CD8-positive, alpha-beta T cell (primary cell): ENCODE measurements at regions of chr1 and their contacts with region 1.

Region 1: GRCh38 chr1:156500797-156501499 is 373 bp upstream of the MEF2D start:
- DNase-seq: peak; percentile 86 to 97 (median 94)
- ATAC-seq: peak; percentile 66
- H3K4me3 ChIP-seq: peak overlapping the region; percentile 87 to 92
- H3K4me3 Mint-ChIP-seq: peak overlapping the region; percentile 92
- H3K27ac ChIP-seq: peak overlapping the region; percentile 93 to 97
- H3K27ac Mint-ChIP-seq: peak overlapping the region; percentile 98
- H3K4me1 ChIP-seq: peaks cover 76% of the 10 kb centered on the region
- H3K4me1 Mint-ChIP-seq: peaks cover 76% of the 10 kb centered on the region
- H3K27me3 ChIP-seq: no peaks in the 10 kb centered on the region
- H3K27me3 Mint-ChIP-seq: no peaks in the 10 kb centered on the region
- CTCF ChIP-seq: peak; percentile 68

Region 2: DNA sequence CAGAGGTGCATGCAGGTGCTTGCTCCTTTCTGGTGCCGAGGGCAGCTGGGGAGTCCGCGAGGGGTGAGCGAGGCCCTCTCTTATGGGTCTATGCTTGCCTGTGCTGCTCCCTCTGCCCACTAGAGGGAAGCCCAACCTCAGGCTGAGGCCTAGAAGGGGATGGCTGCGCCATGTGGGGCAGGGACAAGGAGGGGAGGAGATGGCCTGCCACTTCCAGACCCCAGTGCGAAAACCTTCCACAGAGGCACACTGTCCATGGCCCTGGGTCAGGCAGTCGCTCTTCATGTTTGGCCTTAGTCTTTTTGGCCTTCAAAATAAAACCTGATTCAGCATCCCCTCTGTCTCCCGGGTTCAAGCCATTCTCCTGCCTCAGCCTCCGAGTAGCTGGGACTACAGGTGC is 117.9 kb before region 1 on chr1:
- CTCF ChIA-PET with region 1: interaction called, 10 read pairs
- POLR2A ChIA-PET with region 1: interaction called, 4 read pairs
- intact Hi-C with region 1: no loop called
- DNase-seq: peak; percentile 21 to 73 (median 64)
- ATAC-seq: peak; percentile 82
- H3K4me3 ChIP-seq: no peak overlapping the region
- H3K4me3 Mint-ChIP-seq: no peak overlapping the region
- H3K27ac ChIP-seq: no peak overlapping the region
- H3K27ac Mint-ChIP-seq: no peak overlapping the region
- H3K4me1 ChIP-seq: peaks cover 6% of the 10 kb centered on the region
- H3K4me1 Mint-ChIP-seq: peaks cover 7% of the 10 kb centered on the region
- H3K27me3 ChIP-seq: peaks cover 0 to 3% of the 10 kb centered on the region in 2 experiments
- H3K27me3 Mint-ChIP-seq: peaks cover 9% of the 10 kb centered on the region
- CTCF ChIP-seq: peak; percentile 61

Region 3: DNA sequence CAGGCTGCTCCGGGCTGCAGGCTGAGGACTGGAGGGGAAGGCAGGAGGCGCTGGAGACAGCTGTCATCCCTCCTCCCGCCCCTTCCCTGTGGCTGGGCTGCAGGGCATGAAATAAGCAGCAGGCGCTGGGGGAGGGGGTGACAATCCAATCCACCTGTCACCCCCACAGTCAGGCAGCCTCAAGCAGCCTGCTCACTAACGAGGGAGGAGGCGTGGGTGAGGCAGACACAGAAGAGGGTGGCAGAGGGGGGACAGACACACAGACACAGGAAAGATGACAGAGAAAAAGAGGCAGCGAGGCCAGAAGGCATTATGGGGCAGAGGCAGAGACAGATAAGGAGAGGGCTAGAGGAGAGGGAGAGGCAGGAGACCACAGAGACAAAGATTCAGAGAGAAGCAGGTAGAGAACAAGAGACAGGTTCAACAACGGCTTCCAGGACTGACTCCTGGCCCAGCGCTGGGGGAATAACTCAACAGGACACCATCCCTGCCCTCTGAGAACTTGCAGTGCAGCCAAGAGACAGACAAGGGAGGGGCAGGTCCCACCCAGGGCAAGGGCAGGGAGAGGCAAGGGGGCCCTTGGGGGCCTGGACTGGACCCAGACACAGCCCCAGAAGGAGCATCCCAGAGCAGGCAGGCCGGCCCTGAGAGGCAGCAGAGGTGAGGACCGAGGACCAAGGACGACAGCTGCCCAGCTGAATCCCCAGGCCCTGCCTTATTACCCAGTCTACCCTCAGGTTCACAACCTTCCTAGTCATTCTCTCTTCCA is 11.6 kb before region 1 on chr1:
- CTCF ChIA-PET with region 1: interaction called, 66 read pairs
- POLR2A ChIA-PET with region 1: interaction called, 203 read pairs
- intact Hi-C with region 1: loop called in 1 of 2 experiments (anchors 1 kb)
- DNase-seq: peak in 7 of 9 experiments; percentile 34 to 79 (median 64)
- ATAC-seq: peak; percentile 73
- H3K4me3 ChIP-seq: peak overlapping the region; percentile 24 to 29
- H3K4me3 Mint-ChIP-seq: peak overlapping the region; percentile 73
- H3K27ac ChIP-seq: peak overlapping the region; percentile 44 to 88
- H3K27ac Mint-ChIP-seq: peak overlapping the region; percentile 93
- H3K4me1 ChIP-seq: peaks cover 85% of the 10 kb centered on the region
- H3K4me1 Mint-ChIP-seq: peaks cover 94% of the 10 kb centered on the region
- H3K27me3 ChIP-seq: no peaks in the 10 kb centered on the region
- H3K27me3 Mint-ChIP-seq: no peaks in the 10 kb centered on the region
- CTCF ChIP-seq: no peak

Region 4: GRCh38 chr1:156533568-156534215 is 32.7 kb after region 1 on chr1:
- CTCF ChIA-PET with region 1: interaction called, 7 read pairs
- POLR2A ChIA-PET with region 1: interaction called, 7 read pairs
- intact Hi-C with region 1: loop called in 1 of 2 experiments (anchors 5 kb)
- DNase-seq: no peak
- ATAC-seq: no peak
- H3K4me3 ChIP-seq: no peak overlapping the region
- H3K4me3 Mint-ChIP-seq: no peak overlapping the region
- H3K27ac ChIP-seq: no peak overlapping the region
- H3K27ac Mint-ChIP-seq: peak overlapping the region; percentile 13
- H3K4me1 ChIP-seq: peaks cover 3% of the 10 kb centered on the region
- H3K4me1 Mint-ChIP-seq: peaks cover 3% of the 10 kb centered on the region
- H3K27me3 ChIP-seq: no peaks in the 10 kb centered on the region
- H3K27me3 Mint-ChIP-seq: no peaks in the 10 kb centered on the region
- CTCF ChIP-seq: no peak

Region 5: DNA sequence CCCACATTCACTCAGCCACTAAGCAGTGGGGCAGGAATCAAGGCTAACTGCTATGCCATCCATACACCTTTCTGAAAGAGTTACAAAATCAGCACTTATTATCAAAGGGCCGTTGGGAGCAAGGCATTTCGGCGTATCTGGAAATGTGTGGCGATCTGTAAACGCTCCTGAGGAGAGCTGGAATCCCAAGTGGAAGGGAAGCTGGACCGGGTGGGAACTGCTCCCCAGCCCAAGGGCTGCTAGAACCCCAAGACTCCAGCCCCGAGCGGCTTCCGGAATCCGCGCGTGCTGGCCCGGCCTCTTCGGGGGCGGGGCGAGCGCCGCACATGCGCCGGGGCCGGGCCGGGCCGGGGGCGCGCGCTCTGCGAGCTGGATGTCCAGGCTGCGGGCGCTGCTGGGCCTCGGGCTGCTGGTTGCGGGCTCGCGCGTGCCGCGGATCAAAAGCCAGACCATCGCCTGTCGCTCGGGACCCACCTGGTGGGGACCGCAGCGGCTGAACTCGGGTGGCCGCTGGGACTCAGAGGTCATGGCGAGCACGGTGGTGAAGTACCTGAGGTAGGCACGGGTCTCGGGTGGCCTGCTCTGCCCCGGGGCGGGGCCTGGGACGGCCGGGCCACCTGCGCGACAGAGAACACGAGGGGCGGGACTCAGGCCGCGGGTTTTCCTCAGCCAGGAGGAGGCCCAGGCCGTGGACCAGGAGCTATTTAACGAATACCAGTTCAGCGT is 90.6 kb after region 1 on chr1 and contains the start of gene NAXE:
- CTCF ChIA-PET with region 1: interaction called, 3 read pairs
- POLR2A ChIA-PET with region 1: interaction called, 16 read pairs
- intact Hi-C with region 1: loop called in 1 of 2 experiments (anchors 2 kb)
- DNase-seq: peak; percentile 21 to 84 (median 66)
- ATAC-seq: peak; percentile 95
- H3K4me3 ChIP-seq: peak within 1 kb of the TSS; percentile 51 to 83
- H3K4me3 Mint-ChIP-seq: peak within 1 kb of the TSS; percentile 87
- H3K27ac ChIP-seq: peak within 1 kb of the TSS; percentile 49 to 86
- H3K27ac Mint-ChIP-seq: peak within 1 kb of the TSS; percentile 91
- H3K4me1 ChIP-seq: peaks cover 18% of the 10 kb centered on the region
- H3K4me1 Mint-ChIP-seq: peaks cover 22% of the 10 kb centered on the region
- H3K27me3 ChIP-seq: no peaks in the 10 kb centered on the region
- H3K27me3 Mint-ChIP-seq: no peaks in the 10 kb centered on the region
- CTCF ChIP-seq: no peak
- total RNA-seq, gene NAXE: 18.4 TPM

Region 6: DNA sequence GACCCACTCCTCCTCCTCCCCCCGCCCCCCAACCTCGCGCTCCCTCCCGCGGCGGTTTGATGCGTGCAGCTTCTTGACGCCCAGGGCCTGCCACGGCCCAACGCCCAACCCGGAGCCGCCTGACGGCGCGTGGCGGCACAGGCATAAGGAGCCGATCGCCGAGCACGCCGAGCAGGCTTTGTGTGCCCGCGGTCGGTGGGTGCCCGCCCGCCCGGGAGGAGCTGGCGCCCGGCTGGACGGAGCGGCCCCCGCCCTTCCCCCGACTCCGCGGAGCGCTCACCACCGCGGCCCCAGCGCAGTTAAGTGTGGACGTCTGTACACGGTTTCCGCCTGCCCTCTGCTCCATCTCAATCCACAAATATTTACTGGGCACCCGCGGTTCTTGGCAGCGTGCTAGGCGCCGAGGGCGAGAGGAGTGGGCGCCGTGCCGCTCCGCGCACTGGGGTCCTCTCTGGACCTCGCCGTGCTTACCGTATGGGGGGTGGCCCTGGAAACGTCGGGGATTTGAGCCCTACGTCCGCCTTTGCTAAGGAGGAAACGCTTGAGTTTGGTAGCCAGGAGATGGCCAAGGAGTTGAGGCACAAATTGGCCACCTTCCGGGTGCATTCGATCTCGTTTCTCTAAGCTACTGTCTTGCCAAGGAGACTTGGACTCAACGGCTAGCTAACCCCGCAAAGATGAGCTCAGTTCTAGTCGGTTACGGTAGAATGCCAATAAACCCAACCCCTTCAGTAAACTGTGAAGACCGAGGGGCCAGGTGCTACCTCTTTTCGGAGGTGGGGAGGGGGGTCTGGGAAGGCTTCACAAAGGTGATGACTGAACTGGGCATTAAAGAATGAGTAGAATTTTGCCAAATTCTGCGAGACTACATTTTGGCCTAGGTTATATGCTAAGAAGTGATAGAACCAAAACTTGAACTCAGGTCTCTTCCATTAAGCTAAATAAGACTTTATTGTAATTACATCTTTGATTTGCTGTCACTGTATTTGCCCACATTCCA is 251.1 kb after region 1 on chr1:
- CTCF ChIA-PET with region 1: no interaction called
- POLR2A ChIA-PET with region 1: interaction called, 5 read pairs
- intact Hi-C with region 1: loop called in 1 of 2 experiments (anchors 5 kb)
- DNase-seq: peak; percentile 94 to 98 (median 97)
- ATAC-seq: peak; percentile 85
- H3K4me3 ChIP-seq: peak overlapping the region; percentile 89 to 92
- H3K4me3 Mint-ChIP-seq: peak overlapping the region; percentile 89
- H3K27ac ChIP-seq: peak overlapping the region; percentile 65 to 89
- H3K27ac Mint-ChIP-seq: peak overlapping the region; percentile 90
- H3K4me1 ChIP-seq: peaks cover 48% of the 10 kb centered on the region
- H3K4me1 Mint-ChIP-seq: peaks cover 57% of the 10 kb centered on the region
- H3K27me3 ChIP-seq: no peaks in the 10 kb centered on the region
- H3K27me3 Mint-ChIP-seq: no peaks in the 10 kb centered on the region
- CTCF ChIP-seq: no peak

Region 7: DNA sequence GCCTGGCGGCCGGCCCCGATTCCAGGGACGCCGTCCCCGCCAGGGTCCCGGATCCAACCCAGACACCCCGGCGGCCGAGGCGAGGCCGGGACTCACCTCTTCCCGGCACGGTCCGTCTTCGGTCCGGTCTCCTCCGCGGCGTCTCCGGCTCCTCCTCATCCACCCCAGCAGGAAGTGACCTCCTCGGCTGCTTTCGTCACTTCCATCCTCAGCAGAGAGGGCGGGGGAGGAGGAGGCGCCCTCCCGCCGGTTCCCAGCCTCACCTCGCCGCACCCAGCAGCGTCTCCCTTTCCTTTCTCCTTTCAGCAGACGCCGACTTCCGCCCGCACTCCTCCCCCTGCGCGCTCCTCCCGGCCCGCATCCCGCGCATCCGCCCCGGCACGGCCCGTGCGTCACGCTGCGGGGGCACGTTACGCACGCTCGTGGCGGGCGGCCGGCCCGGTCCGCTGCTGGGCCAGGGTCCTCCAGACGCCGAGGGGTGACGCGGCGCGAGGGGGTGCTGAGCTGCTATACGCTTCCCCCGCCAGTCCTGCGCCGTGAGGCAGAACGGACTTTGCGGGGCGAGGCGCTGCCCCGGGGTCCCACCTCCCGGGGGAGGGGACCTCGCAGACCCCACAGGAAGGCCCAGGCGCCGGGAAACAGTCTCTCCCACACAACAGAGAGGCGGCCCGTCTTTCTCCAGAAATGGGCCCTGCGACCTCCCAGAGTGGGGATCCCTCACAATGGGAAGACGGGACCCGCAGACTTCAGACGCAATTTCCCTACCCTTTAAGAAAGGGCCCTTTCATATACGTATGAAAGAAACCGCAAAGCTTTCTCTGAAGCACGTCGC is 637.5 kb after region 1 on chr1 and contains the start of gene ETV3:
- CTCF ChIA-PET with region 1: no interaction called
- POLR2A ChIA-PET with region 1: no interaction called
- intact Hi-C with region 1: loop called (anchors 5 kb)
- DNase-seq: peak; percentile 73 to 96 (median 87)
- ATAC-seq: peak; percentile 77
- H3K4me3 ChIP-seq: peak within 1 kb of the TSS; percentile 85 to 93
- H3K4me3 Mint-ChIP-seq: peak within 1 kb of the TSS; percentile 94
- H3K27ac ChIP-seq: peak within 1 kb of the TSS; percentile 84 to 97
- H3K27ac Mint-ChIP-seq: peak within 1 kb of the TSS; percentile 95
- H3K4me1 ChIP-seq: peaks cover 52% of the 10 kb centered on the region
- H3K4me1 Mint-ChIP-seq: peaks cover 54% of the 10 kb centered on the region
- H3K27me3 ChIP-seq: no peaks in the 10 kb centered on the region
- H3K27me3 Mint-ChIP-seq: no peaks in the 10 kb centered on the region
- CTCF ChIP-seq: no peak
- total RNA-seq, gene ETV3: 88.9 to 94.0 TPM